Adrenal gland (tissue), 19 donors: ENCODE measurements at regions of chr7 and their contacts with region 1.

Region 1: GRCh38 chr7:57354679-57355338 is 95.2 kb upstream of the ZNF716 start:
- DNase-seq: peak; percentile 58 to 89 (median 83)
- H3K4me3 ChIP-seq: no peak overlapping the region
- H3K27ac ChIP-seq: peak overlapping the region; percentile 56 to 80 (median 67)
- H3K4me1 ChIP-seq: peaks cover 3 to 4% of the 10 kb centered on the region in 2 donors
- H3K27me3 ChIP-seq: no peaks in the 10 kb centered on the region
- CTCF ChIP-seq: no peak
- POLR2A ChIP-seq: peak in 1 of 2 donors; percentile 18

Region 2: DNA sequence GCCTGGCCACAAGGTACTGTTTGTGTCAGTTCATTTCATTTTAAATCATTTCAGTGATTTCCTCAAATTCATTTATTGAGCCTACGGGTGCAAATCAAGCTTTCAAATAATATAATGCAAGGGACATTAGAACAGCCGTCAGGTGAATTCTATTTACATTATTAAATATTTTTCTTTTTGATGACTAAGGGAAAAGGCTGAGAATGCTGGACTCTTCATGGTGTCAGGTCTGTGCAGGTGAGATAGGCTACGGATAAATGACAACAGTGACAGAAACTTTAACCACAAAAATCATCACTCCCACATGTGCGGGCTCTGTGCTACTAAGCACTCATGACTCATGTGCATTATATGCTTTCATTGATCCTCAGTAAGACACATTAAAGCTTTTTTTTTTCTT is 54.1 kb before region 1 on chr7:
- intact Hi-C with region 1: loop called in 1 of 2 experiments (anchors 10 kb)
- DNase-seq: no peak
- H3K4me3 ChIP-seq: no peak overlapping the region
- H3K27ac ChIP-seq: no peak overlapping the region
- H3K4me1 ChIP-seq: no peaks in the 10 kb centered on the region
- H3K27me3 ChIP-seq: no peaks in the 10 kb centered on the region
- CTCF ChIP-seq: no peak
- POLR2A ChIP-seq: no peak

Region 3: GRCh38 chr7:57425969-57426628 is 71.3 kb after region 1 on chr7:
- intact Hi-C with region 1: no loop called
- DNase-seq: peak in 1 of 7 donors; percentile 40
- H3K4me3 ChIP-seq: no peak overlapping the region
- H3K27ac ChIP-seq: no peak overlapping the region
- H3K4me1 ChIP-seq: no peaks in the 10 kb centered on the region
- H3K27me3 ChIP-seq: no peaks in the 10 kb centered on the region
- CTCF ChIP-seq: peak in 4 of 6 experiments; percentile 8 to 42 (median 19)
- POLR2A ChIP-seq: no peak